T-cell (primary cell): ENCODE measurements at regions of chr2 and their contacts with region 1.

Region 1: DNA sequence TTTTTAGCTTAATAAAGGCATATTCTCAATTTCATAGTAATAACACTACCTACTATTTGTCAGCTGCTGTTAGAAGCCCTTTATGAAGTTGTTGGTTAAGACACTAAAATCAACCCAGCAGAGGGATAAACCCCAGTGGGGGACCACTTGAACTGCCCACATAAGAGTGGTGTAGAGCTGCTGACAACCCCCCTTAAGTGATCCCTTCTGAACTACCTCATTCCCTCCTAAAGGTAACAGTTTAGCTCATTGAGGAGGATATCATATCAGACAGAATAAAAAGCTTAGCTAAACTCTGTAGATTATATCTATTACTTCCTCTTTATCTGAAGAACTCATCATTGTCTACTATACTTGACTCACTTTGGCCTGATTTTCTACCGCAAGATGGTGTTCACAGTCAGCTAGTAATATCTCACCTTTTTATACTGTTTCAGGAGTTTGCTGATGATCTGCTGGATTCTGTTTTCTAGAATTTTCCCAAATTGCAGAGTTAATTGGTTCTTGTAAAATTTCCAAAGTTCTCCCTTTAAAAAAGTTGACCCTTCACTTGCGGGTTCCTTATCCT is 16.2 kb downstream of the GALM start:
- DNase-seq: peak in 5 of 35 experiments; percentile 16 to 71 (median 21)
- ATAC-seq: peak; percentile 77 to 86 (median 84)
- H3K4me3 ChIP-seq: peak overlapping the region in 1 of 2 donors; percentile 25
- H3K4me3 Mint-ChIP-seq: peak overlapping the region; percentile 60 to 67 (median 61)
- H3K27ac ChIP-seq: peak overlapping the region; percentile 94
- H3K27ac Mint-ChIP-seq: peak overlapping the region; percentile 89 to 95
- H3K4me1 ChIP-seq: peaks cover 0 to 37% of the 10 kb centered on the region in 2 experiments
- H3K4me1 Mint-ChIP-seq: peaks cover 34 to 64% (median 40%) of the 10 kb centered on the region in 3 donors
- H3K27me3 ChIP-seq: no peaks in the 10 kb centered on the region
- H3K27me3 Mint-ChIP-seq: no peaks in the 10 kb centered on the region

Region 2: GRCh38 chr2:37802899-37803379 is 879.2 kb before region 1 on chr2:
- CTCF ChIA-PET with region 1: no interaction called
- POLR2A ChIA-PET with region 1: no interaction called
- DNase-seq: no peak
- ATAC-seq: no peak
- H3K4me3 ChIP-seq: no peak overlapping the region
- H3K4me3 Mint-ChIP-seq: no peak overlapping the region
- H3K27ac ChIP-seq: no peak overlapping the region
- H3K27ac Mint-ChIP-seq: no peak overlapping the region
- H3K4me1 ChIP-seq: no peaks in the 10 kb centered on the region
- H3K4me1 Mint-ChIP-seq: peaks cover 0 to 2% (median 0%) of the 10 kb centered on the region in 3 donors
- H3K27me3 ChIP-seq: no peaks in the 10 kb centered on the region
- H3K27me3 Mint-ChIP-seq: no peaks in the 10 kb centered on the region

Region 3: GRCh38 chr2:38590053-38590452 is 92.0 kb before region 1 on chr2:
- CTCF ChIA-PET with region 1: no interaction called
- POLR2A ChIA-PET with region 1: no interaction called
- DNase-seq: peak in 1 of 35 experiments; percentile 36
- ATAC-seq: no peak
- H3K4me3 ChIP-seq: no peak overlapping the region
- H3K4me3 Mint-ChIP-seq: peak overlapping the region in 2 of 3 donors; percentile 32 to 34
- H3K27ac ChIP-seq: peak overlapping the region; percentile 66
- H3K27ac Mint-ChIP-seq: peak overlapping the region; percentile 13 to 84
- H3K4me1 ChIP-seq: peaks cover 0 to 24% of the 10 kb centered on the region in 2 experiments
- H3K4me1 Mint-ChIP-seq: peaks cover 21 to 69% (median 61%) of the 10 kb centered on the region in 3 donors
- H3K27me3 ChIP-seq: no peaks in the 10 kb centered on the region
- H3K27me3 Mint-ChIP-seq: no peaks in the 10 kb centered on the region

Region 4: GRCh38 chr2:38602732-38603401 is 79.2 kb before region 1 on chr2 and contains the start of gene HNRNPLL:
- CTCF ChIA-PET with region 1: interaction called, 3 to 17 read pairs
- POLR2A ChIA-PET with region 1: interaction called in 1 of 2 experiments, 3 read pairs
- DNase-seq: peak; percentile 81 to 94 (median 89)
- ATAC-seq: peak; percentile 85 to 89 (median 88)
- H3K4me3 ChIP-seq: peak within 1 kb of the TSS; percentile 85 to 86
- H3K4me3 Mint-ChIP-seq: peak within 1 kb of the TSS; percentile 88 to 94 (median 94)
- H3K27ac ChIP-seq: peak within 1 kb of the TSS; percentile 79
- H3K27ac Mint-ChIP-seq: peak within 1 kb of the TSS; percentile 90 to 92
- H3K4me1 ChIP-seq: peaks cover 19 to 22% of the 10 kb centered on the region in 2 experiments
- H3K4me1 Mint-ChIP-seq: peaks cover 45 to 53% (median 49%) of the 10 kb centered on the region in 3 donors
- H3K27me3 ChIP-seq: no peaks in the 10 kb centered on the region
- H3K27me3 Mint-ChIP-seq: no peaks in the 10 kb centered on the region
- total RNA-seq, gene HNRNPLL: 28.1 to 69.0 (median 35.2) TPM

Region 5: DNA sequence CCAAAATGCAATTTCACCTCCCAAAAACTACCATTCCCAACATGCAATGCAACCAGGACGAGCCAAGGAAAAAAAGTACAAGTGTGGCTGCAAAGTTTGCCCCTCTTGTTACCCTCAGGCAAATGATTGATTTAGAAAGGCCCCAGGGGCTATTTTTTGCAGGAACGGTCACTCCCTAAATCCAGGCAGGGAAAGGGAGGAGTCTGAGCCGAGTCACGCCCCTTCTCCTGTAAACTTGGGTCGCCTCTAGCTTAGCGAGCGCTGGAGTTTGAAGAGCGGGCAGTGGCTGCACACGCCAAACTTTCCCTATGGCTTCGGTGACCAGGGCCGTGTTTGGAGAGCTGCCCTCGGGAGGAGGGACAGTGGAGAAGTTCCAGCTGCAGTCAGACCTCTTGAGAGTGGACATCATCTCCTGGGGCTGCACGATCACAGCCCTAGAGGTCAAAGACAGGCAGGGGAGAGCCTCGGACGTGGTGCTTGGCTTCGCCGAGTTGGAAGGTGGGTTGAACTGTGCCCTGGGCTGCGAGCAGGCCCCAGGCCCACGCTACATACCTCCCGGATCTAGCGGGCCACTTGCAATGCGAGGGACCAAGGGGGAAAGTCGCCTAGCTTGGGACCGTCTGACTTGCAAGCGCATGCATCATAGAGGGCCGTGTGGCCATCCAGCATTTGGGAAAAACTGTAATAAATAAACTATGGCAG is 16.1 kb before region 1 on chr2 and contains the start of gene GALM:
- CTCF ChIA-PET with region 1: interaction called in 1 of 2 experiments, 15 read pairs
- POLR2A ChIA-PET with region 1: interaction called, 5 to 13 read pairs
- DNase-seq: peak in 28 of 35 experiments; percentile 10 to 69 (median 33)
- ATAC-seq: peak; percentile 35 to 49 (median 46)
- H3K4me3 ChIP-seq: peak within 1 kb of the TSS; percentile 70 to 95
- H3K4me3 Mint-ChIP-seq: peak within 1 kb of the TSS; percentile 85 to 91 (median 90)
- H3K27ac ChIP-seq: peak within 1 kb of the TSS; percentile 79
- H3K27ac Mint-ChIP-seq: peak within 1 kb of the TSS; percentile 97 to 99
- H3K4me1 ChIP-seq: peaks cover 13 to 54% of the 10 kb centered on the region in 2 experiments
- H3K4me1 Mint-ChIP-seq: peaks cover 43 to 68% (median 55%) of the 10 kb centered on the region in 3 donors
- H3K27me3 ChIP-seq: no peaks in the 10 kb centered on the region
- H3K27me3 Mint-ChIP-seq: no peaks in the 10 kb centered on the region
- total RNA-seq, gene GALM: 14.3 to 29.4 (median 17.3) TPM

Region 6: DNA sequence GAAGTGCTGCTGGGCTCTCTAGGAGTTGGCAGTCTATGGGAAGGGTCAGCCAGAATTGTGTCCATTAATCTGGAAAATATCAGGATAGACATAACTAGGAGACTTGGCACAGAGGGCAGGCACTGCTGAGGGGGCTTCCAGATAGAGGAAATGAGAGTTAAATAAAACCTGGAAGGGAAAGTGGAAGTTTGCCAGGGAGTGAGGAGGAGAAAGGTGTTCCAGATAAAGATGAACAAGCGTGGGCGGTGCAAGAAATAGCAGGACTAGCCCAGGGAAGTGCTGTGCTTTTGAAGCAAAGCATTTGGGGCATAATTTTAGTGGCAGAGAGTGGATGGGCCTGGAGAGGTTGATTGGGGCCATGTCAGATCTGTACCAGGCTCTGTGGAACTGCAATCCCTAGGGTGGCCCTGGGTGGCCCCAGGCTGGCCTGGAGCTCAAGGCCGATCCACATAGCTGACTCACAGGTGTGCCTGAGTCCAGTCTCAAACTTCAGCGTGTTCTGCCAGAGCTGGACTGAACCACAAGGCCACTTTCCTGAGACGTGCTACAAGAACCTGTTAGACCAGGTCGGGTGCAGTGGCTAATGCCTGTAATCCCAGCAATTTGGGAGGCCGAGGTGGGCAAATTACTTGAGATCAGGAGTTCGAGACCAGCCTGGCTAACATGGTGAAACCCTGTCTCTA is 10.7 kb after region 1 on chr2:
- CTCF ChIA-PET with region 1: interaction called, 3 to 8 read pairs
- POLR2A ChIA-PET with region 1: interaction called, 7 to 14 read pairs
- DNase-seq: no peak
- ATAC-seq: no peak
- H3K4me3 ChIP-seq: no peak overlapping the region
- H3K4me3 Mint-ChIP-seq: peak overlapping the region in 1 of 3 donors; percentile 5
- H3K27ac ChIP-seq: peak overlapping the region; percentile 60
- H3K27ac Mint-ChIP-seq: peak overlapping the region; percentile 85 to 88
- H3K4me1 ChIP-seq: peaks cover 0 to 49% of the 10 kb centered on the region in 2 experiments
- H3K4me1 Mint-ChIP-seq: peaks cover 50 to 76% (median 55%) of the 10 kb centered on the region in 3 donors
- H3K27me3 ChIP-seq: no peaks in the 10 kb centered on the region
- H3K27me3 Mint-ChIP-seq: no peaks in the 10 kb centered on the region

Region 7: GRCh38 chr2:38720613-38721241 is 38.6 kb after region 1 on chr2:
- CTCF ChIA-PET with region 1: interaction called in 1 of 2 experiments, 13 read pairs
- POLR2A ChIA-PET with region 1: no interaction called
- DNase-seq: no peak
- ATAC-seq: no peak
- H3K4me3 ChIP-seq: no peak overlapping the region
- H3K4me3 Mint-ChIP-seq: no peak overlapping the region
- H3K27ac ChIP-seq: peak overlapping the region; percentile 4
- H3K27ac Mint-ChIP-seq: peak overlapping the region; percentile 56 to 77
- H3K4me1 ChIP-seq: peaks cover 14 to 22% of the 10 kb centered on the region in 2 experiments
- H3K4me1 Mint-ChIP-seq: peaks cover 30 to 55% (median 42%) of the 10 kb centered on the region in 3 donors
- H3K27me3 ChIP-seq: no peaks in the 10 kb centered on the region
- H3K27me3 Mint-ChIP-seq: no peaks in the 10 kb centered on the region